Right cardiac atrium (tissue), 5 donors: ENCODE measurements at regions of chr12 and their contacts with region 1.

Region 1: GRCh38 chr12:3186546-3187215 is 109.5 kb downstream of the TSPAN9 start:
- DNase-seq: no peak
- ATAC-seq: no peak
- H3K4me3 ChIP-seq: no peak overlapping the region
- H3K27ac ChIP-seq: no peak overlapping the region
- H3K4me1 ChIP-seq: peaks cover 30% of the 10 kb centered on the region
- H3K27me3 ChIP-seq: no peaks in the 10 kb centered on the region

Region 2: DNA sequence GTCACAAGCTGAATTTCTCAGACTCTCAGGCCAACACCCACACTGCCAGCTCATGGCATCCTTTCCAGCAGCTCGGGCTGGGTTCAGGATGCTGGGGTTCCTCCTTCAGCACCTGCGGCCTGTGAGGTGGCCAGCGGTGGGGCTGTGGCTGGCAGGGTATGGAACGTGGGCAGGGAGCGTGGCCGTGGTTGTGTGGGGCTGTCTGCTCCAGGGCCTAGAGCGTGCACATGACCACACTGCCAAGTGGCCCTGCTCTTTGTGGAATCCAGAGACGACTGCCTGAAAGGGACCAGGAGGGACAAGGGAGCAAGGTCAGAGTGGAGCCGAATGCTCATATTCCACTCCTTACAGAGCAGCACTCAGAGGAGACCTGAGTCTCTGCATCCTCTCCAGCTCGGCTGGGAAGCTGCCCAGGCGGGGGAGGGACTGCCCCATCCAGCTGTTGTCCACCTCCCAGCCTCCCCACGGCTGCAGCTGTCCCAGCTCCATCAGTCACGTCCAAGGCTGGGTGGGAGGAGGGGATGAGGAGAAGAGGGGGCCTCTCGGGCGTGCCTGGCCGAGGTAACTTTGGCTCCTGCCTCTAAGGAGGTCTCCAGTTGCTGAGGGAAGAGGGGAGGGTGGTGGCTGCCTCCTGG is 38.2 kb before region 1 on chr12:
- intact Hi-C with region 1: loop called in 2 of 4 experiments (anchors 5 to 10 kb)
- DNase-seq: peak; percentile 48 to 81 (median 77)
- ATAC-seq: no peak
- H3K4me3 ChIP-seq: no peak overlapping the region
- H3K27ac ChIP-seq: no peak overlapping the region
- H3K4me1 ChIP-seq: peaks cover 21% of the 10 kb centered on the region
- H3K27me3 ChIP-seq: no peaks in the 10 kb centered on the region

Region 3: DNA sequence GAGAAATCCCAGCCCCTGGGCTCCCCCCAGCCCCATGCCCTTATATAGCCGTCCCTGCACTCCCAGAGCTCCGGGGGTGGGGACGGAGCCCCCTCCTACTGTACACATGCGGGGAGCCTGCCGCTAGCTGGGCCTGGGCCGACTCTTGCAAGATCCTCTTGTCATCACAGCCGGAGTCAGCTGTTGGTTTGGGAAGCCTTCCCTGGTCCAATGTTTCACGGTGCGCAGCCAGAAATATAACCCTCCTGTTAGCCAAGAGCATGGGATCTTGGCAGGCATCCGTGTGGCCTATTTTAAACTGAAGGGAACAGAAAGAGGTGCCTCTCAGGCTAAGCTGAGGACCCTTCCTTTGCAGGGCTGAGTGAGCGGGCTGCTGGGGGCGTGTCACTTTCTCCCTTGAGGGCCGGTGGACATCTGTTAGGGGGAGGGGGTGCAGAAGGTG is 65.8 kb after region 1 on chr12:
- intact Hi-C with region 1: no loop called
- DNase-seq: peak; percentile 91 to 95 (median 95)
- ATAC-seq: peak; percentile 68 to 79
- H3K4me3 ChIP-seq: no peak overlapping the region
- H3K27ac ChIP-seq: peak overlapping the region; percentile 95
- H3K4me1 ChIP-seq: peaks cover 47% of the 10 kb centered on the region
- H3K27me3 ChIP-seq: no peaks in the 10 kb centered on the region